ENCODE measurements at regions of chr4 and their contacts with region 1.

Region 1: DNA sequence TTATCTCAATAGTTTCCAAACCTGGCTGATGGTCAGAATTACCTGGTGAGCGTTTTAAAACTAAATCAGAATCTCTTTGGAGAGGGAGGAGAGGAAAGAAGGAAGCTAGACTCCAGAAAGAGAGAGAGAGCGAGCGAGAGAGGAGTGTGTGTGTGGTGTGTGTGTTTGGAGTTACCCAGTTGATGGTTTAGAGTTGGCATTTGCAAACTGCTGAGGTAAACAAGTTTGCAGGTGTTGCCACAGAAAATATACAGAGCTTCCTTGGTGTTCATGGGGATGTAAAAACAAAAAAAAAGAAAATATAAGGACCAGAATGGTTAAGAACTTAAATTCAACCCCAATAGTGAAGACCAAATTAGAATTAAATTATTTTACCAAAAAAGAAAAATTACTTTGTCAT is 26.4 kb upstream of the LAP3 start:
- DNase-seq: no peak
- H3K4me3 ChIP-seq: no peak overlapping the region
- H3K27ac ChIP-seq: no peak overlapping the region
- H3K4me1 ChIP-seq: no peaks in the 10 kb centered on the region
- H3K27me3 ChIP-seq: peaks cover 0 to 26% (median 0%) of the 10 kb centered on the region in 4 donors
- CTCF ChIP-seq: no peak
- EP300 ChIP-seq: no peak
- POLR2A ChIP-seq: no peak

Region 2: GRCh38 chr4:17241835-17242234 is 308.7 kb before region 1 on chr4:
- intact Hi-C with region 1: no loop called
- DNase-seq: no peak
- H3K4me3 ChIP-seq: no peak overlapping the region
- H3K27ac ChIP-seq: no peak overlapping the region
- H3K4me1 ChIP-seq: no peaks in the 10 kb centered on the region
- H3K27me3 ChIP-seq: no peaks in the 10 kb centered on the region
- CTCF ChIP-seq: no peak
- EP300 ChIP-seq: no peak
- POLR2A ChIP-seq: no peak

Region 3: DNA sequence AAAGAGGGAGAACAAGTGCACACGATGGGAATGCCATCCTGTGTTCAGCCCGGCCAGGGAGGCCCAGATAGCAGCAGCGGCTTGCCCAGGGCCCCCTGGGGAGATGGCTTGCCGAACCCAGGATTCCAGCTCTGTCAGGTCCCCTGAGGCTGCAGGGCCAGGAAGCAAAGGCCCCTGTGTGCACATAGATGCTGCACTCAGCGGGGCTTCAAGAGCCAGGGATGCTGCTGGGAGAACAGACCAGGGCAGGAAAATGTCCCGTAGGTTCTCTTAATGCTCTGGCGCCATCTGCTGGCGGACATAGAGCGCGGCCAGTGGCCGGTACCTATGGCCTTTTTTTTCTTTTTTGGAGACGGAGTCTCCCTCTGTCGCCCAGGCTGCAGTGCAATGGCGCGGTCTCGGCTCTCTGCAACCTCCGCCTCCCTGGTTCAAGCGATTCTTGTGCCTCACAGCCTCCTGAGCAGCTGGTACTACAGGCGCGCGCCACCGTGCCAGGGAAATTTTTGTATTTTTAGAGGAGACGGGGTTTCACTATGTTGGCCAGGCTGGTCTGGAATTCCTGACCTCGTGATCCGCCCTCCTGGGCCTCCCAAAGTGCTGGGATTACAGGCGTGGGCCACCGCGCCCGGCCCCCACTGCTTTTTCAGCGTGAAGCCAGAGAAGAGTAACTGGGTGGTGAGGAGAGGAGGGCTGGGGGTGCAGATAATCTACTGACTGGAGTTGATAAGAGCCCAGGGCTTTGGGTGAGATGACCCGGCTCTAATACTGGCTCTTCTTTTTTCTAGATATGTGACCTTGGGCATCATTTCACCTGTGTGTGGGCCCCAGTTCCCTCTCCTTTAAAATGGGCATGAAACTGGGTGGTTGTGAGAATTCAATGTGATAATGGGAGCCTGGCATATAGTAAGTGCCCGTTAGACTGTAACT is 86.4 kb after region 1 on chr4:
- intact Hi-C with region 1: loop called (anchors 2 kb)
- DNase-seq: no peak
- H3K4me3 ChIP-seq: no peak overlapping the region
- H3K27ac ChIP-seq: no peak overlapping the region
- H3K4me1 ChIP-seq: peaks cover 0 to 10% (median 8%) of the 10 kb centered on the region in 4 donors
- H3K27me3 ChIP-seq: peaks cover 0 to 4% (median 0%) of the 10 kb centered on the region in 4 donors
- CTCF ChIP-seq: peak; percentile 78 to 96 (median 79)
- EP300 ChIP-seq: no peak
- POLR2A ChIP-seq: no peak

Measured in esophagus muscularis mucosa (tissue), 4 donors.